ENCODE measurements at regions of chr1 and their contacts with region 1.

Region 1: DNA sequence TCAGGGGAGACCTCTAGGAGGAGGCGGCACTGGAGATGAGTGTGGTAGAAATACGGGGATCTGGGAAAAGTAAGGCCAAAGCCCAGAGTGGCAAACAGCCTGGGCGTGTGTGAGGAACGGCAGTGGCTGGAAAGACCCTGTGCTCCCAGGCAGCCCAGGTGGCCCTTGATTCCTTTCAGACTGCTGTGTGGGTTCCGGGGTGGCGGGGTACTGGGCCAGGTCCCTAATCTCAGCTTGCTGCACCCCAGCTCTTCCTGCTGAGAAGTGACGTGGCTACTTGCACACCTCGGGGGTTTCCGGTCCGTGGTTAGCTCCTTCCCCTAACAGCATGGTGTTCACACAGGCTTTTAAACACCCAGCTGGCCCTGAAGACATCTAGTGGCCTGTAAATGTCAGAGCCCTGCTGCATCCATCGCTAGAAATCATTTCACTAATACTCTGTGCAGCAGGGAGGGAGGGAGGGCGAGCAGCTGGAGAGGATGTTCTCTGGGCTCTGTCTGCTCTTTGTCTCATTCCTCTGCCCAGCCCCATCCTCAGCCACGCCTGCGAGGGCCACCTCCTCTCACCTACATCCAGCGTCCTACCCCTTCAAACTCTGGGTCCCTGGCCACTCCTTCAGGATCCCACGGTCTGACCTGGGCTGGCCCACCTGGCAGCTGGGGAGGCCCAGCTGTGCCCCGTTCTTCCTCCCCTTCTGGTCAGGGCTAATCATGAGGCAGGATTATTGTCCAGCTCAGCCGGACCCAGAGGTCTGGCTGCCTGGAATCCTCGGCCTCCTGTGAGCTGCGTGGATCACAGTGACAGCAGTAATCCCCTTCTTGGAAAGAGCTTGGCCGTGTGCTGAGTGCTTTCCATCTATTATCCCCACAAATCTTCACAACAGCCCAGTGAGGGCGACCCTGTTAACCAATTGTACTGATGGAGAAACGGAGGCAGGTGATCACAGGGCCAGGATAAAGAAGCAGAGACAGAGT is 7.2 kb downstream of the ZDHHC18 start:
- DNase-seq: peak; percentile 97
- ATAC-seq: peak; percentile 97
- H3K4me3 Mint-ChIP-seq: peak overlapping the region; percentile 69
- H3K27ac Mint-ChIP-seq: peak overlapping the region; percentile 98
- H3K4me1 Mint-ChIP-seq: peaks cover 65% of the 10 kb centered on the region
- H3K27me3 Mint-ChIP-seq: no peaks in the 10 kb centered on the region

Region 2: GRCh38 chr1:26574719-26575251 is 258.9 kb before region 1 on chr1:
- CTCF ChIA-PET with region 1: no interaction called
- POLR2A ChIA-PET with region 1: no interaction called
- DNase-seq: no peak
- ATAC-seq: no peak
- H3K4me3 Mint-ChIP-seq: no peak overlapping the region
- H3K27ac Mint-ChIP-seq: no peak overlapping the region
- H3K4me1 Mint-ChIP-seq: peaks cover 23% of the 10 kb centered on the region
- H3K27me3 Mint-ChIP-seq: no peaks in the 10 kb centered on the region

Region 3: DNA sequence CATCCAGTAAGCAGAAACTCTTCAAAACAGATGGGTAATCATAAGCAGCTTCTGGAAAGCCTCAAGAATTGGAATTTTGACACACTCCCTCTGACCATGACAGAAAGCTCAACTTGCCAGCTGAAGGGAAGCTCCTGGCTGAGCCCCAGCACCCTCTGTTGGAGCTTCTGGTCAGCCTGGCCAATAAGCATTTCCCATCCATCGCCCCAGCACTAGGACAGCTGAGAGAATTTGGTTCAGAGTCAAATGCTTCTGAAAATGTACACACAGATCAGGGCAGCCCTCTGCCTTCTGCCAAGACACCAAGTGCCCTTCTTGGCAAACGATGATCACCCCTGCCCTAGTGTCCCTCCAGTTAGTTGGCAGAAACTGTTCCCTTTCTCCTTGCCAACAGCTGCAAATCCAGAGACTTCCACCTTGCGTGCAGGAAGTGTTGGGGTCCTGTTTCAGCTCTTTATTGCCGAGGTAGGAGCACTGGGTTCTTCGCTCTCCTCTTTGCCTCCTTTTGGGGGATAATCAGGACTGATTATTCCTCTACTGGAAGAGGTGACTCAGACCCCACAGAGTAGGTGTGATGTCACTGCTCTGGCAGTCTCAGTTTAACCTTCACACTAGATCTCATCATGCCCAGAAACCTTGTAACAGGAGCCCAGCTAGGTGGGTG is 34.1 kb before region 1 on chr1:
- CTCF ChIA-PET with region 1: interaction called, 42 read pairs
- POLR2A ChIA-PET with region 1: interaction called, 8 read pairs
- DNase-seq: peak; percentile 54
- ATAC-seq: peak; percentile 76
- H3K4me3 Mint-ChIP-seq: peak overlapping the region; percentile 74
- H3K27ac Mint-ChIP-seq: peak overlapping the region; percentile 90
- H3K4me1 Mint-ChIP-seq: peaks cover 51% of the 10 kb centered on the region
- H3K27me3 Mint-ChIP-seq: no peaks in the 10 kb centered on the region

Region 4: GRCh38 chr1:26811057-26811456 is 22.7 kb before region 1 on chr1:
- CTCF ChIA-PET with region 1: interaction called, 88 read pairs
- POLR2A ChIA-PET with region 1: interaction called, 4 read pairs
- DNase-seq: no peak
- ATAC-seq: no peak
- H3K4me3 Mint-ChIP-seq: no peak overlapping the region
- H3K27ac Mint-ChIP-seq: peak overlapping the region; percentile 74
- H3K4me1 Mint-ChIP-seq: peaks cover 21% of the 10 kb centered on the region
- H3K27me3 Mint-ChIP-seq: no peaks in the 10 kb centered on the region

Region 5: DNA sequence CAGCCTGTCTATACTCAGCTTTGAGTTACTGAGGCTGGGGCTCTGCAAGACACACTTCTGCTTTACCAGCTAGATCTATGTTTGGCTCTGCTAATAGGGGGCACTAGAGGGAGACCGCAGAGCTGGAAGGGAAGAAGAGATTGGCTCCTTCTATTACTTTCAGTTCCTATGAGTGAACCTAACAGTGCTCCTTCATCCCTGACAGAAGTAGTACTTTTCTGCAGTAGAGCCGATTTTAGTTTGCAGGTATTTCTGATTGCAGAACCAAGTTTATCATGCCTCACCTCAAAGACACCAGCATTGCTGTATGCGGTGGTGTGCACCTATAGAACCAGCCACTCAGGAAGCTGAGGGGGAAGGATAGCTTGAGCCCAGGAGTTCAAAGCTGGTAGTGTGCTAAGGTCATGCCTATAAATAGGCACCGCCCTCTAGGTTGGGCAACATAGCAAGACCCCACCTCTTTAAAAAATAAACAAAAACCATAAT is 12.9 kb before region 1 on chr1:
- CTCF ChIA-PET with region 1: interaction called, 54 read pairs
- POLR2A ChIA-PET with region 1: interaction called, 20 read pairs
- DNase-seq: peak; percentile 64
- ATAC-seq: peak; percentile 93
- H3K4me3 Mint-ChIP-seq: peak overlapping the region; percentile 70
- H3K27ac Mint-ChIP-seq: peak overlapping the region; percentile 80
- H3K4me1 Mint-ChIP-seq: peaks cover 25% of the 10 kb centered on the region
- H3K27me3 Mint-ChIP-seq: no peaks in the 10 kb centered on the region

Region 6: DNA sequence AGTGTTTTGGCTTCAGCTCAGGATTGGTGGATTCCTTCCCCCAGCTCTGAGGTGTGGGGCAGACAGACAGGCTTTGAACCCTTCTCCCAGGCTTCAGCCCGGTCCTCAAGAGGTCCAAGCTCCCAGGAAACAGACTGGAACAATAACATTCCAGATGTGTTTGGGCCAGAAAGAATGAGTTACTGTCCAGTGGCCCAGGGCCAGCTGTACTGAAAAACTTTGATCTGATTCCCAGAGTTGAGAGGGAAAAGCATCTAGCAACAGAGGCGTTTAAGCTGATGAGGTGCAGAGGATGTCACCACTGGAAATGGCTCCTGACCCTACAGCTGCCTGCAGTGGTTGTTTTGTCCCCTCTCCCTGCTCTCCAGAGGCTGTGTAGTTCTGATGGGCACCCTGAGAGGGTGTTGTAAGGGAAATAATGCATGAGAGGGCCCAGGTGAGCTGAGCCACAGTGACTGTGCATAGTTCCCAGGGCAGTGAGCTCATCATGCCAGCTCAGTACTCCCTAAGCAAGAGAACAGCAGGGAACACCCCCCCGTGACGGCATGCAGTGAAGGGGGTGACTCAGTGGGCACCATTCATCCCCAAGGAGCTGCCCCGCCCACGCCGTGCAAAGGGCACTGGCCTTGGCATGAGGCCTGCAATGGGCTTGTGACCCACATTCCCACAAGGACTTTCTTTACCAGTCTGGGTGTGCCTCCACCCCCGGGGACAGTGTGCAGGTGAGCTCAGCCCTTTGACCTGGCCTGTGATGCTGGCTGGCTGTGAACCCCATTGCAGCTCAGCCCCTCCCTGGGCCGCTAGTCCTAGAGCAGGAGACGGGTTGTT is 15.4 kb after region 1 on chr1:
- CTCF ChIA-PET with region 1: interaction called, 10 read pairs
- POLR2A ChIA-PET with region 1: interaction called, 3 read pairs
- DNase-seq: no peak
- ATAC-seq: no peak
- H3K4me3 Mint-ChIP-seq: no peak overlapping the region
- H3K27ac Mint-ChIP-seq: no peak overlapping the region
- H3K4me1 Mint-ChIP-seq: peaks cover 9% of the 10 kb centered on the region
- H3K27me3 Mint-ChIP-seq: no peaks in the 10 kb centered on the region